ENCODE measurements at regions of chrX and their contacts with region 1.

Region 1: GRCh38 chrX:16826207-16826606 is 39.9 kb downstream of the TXLNG start:
- DNase-seq: peak in 1 of 2 experiments; percentile 46
- H3K4me3 ChIP-seq: no peak overlapping the region
- H3K27ac ChIP-seq: no peak overlapping the region
- H3K4me1 ChIP-seq: no peaks in the 10 kb centered on the region; the same call in 1 of the 2 replicates
- H3K27me3 ChIP-seq: no peaks in the 10 kb centered on the region
- CTCF ChIP-seq: peak; percentile 67

Region 2: DNA sequence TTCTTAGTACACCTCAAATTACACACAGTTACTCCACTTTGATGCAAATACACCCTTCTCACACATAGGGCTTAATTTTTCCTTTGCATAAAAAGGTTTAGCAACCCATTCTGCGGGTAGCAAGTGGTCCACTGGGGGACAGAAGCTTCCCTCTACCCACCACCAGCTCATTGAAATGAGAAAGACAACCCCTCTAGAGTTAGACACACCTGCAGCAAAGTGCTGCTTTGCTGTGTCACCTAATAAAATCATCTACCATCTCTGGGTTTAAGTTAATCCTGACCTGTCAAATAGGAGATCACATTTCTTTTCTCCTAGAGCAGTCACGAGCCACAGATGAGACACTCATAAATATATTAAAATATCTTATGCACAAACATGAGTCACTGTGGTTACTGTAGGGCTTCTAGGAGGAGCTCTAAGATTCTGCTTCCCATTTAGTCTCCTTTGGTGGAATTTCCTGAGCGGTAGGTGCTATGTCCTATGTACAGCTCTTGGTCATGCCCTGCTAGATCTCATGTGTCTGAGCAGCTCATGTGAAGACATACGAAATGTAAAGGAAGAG is 1313.7 kb before region 1 on chrX:
- CTCF ChIA-PET with region 1: interaction called, 15 read pairs
- POLR2A ChIA-PET with region 1: no interaction called
- intact Hi-C with region 1: no loop called
- DNase-seq: peak in 1 of 2 experiments; percentile 35
- H3K4me3 ChIP-seq: no peak overlapping the region
- H3K27ac ChIP-seq: no peak overlapping the region
- H3K4me1 ChIP-seq: no peaks in the 10 kb centered on the region
- H3K27me3 ChIP-seq: no peaks in the 10 kb centered on the region
- CTCF ChIP-seq: no peak

Region 3: DNA sequence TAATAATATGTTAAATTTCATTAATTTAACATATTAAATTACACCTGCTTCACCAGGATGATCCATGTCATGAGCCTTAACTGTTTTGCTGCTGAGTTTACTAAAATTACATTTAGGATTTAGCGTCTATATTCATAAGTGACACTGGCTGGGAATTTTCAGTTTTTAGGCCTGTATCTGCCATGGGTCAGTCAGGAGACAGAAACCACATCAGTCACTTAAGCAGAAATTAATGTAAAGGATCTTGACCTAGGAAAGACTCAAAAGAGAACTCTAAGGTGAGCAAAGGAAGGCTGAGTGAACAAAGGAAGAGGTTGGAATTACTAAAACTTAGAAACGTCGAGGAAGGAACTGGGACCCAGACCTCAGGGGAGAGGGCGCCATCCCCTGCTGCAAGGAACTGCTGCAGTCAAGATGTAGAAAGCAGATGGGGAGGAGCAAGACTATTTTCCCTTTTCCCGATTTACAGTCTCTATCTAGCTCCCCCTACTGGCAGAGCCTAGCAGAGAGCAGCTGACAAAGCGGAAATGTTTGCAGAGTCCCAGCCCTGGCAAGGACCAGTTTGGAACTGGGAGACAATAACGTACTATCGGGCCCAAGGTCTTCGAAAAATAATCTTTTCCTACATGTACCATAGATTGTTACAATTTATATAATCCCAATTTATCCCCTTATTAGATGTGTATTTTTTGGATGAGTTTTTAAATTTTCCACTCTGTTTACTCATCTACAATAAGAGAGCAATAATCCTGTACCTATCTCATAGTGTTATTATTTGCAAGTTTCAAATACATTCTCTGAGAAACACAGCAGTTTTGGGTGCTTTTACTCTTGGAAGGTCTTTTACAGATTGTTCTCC is 66.5 kb after region 1 on chrX:
- CTCF ChIA-PET with region 1: interaction called, 10 read pairs
- POLR2A ChIA-PET with region 1: no interaction called
- intact Hi-C with region 1: no loop called
- DNase-seq: peak; percentile 43 to 54
- H3K4me3 ChIP-seq: no peak overlapping the region
- H3K27ac ChIP-seq: no peak overlapping the region
- H3K4me1 ChIP-seq: no peaks in the 10 kb centered on the region
- H3K27me3 ChIP-seq: no peaks in the 10 kb centered on the region
- CTCF ChIP-seq: peak; percentile 80

Measured in PC-9 (cell line).